Caco-2 (cell line): ENCODE measurements at regions of chr14 and their contacts with region 1.

Region 1: DNA sequence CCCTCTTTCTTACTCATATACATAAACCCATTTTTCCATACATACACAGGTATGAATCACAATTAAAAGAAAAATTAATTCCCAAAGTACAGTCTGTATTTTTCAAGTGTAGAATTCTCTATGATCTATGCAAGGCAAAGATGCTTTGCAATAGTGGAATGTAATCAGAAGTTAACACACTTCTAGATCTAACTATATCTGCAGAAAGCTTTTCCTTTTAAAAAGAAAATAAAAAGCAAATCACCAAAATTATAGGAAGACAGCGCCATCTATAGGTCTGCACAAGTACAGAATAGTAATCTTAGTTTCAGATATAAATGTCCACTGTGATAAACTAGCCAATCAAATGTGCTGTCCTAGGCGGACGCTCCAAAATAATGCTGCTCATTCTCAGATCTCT is 22.0 kb downstream of the SLC25A21 start:
- DNase-seq: peak in 1 of 2 experiments; percentile 48
- H3K4me3 ChIP-seq: no peak overlapping the region
- H3K4me3 Mint-ChIP-seq: no peak overlapping the region
- H3K27ac Mint-ChIP-seq: no peak overlapping the region
- H3K4me1 ChIP-seq: no peaks in the 10 kb centered on the region
- H3K4me1 Mint-ChIP-seq: peaks cover 6% of the 10 kb centered on the region
- H3K27me3 ChIP-seq: no peaks in the 10 kb centered on the region
- H3K27me3 Mint-ChIP-seq: no peaks in the 10 kb centered on the region
- CTCF ChIP-seq: peak; percentile 61 to 64

Region 2: GRCh38 chr14:36553656-36554260 is 596.7 kb before region 1 on chr14:
- CTCF ChIA-PET with region 1: interaction called, 14 read pairs
- POLR2A ChIA-PET with region 1: no interaction called
- intact Hi-C with region 1: loop called (anchors 2 kb)
- DNase-seq: peak in 1 of 2 experiments; percentile 48
- H3K4me3 ChIP-seq: no peak overlapping the region
- H3K4me3 Mint-ChIP-seq: no peak overlapping the region
- H3K27ac Mint-ChIP-seq: no peak overlapping the region
- H3K4me1 ChIP-seq: no peaks in the 10 kb centered on the region
- H3K4me1 Mint-ChIP-seq: no peaks in the 10 kb centered on the region
- H3K27me3 ChIP-seq: no peaks in the 10 kb centered on the region
- H3K27me3 Mint-ChIP-seq: no peaks in the 10 kb centered on the region
- CTCF ChIP-seq: peak; percentile 65 to 80

Region 3: DNA sequence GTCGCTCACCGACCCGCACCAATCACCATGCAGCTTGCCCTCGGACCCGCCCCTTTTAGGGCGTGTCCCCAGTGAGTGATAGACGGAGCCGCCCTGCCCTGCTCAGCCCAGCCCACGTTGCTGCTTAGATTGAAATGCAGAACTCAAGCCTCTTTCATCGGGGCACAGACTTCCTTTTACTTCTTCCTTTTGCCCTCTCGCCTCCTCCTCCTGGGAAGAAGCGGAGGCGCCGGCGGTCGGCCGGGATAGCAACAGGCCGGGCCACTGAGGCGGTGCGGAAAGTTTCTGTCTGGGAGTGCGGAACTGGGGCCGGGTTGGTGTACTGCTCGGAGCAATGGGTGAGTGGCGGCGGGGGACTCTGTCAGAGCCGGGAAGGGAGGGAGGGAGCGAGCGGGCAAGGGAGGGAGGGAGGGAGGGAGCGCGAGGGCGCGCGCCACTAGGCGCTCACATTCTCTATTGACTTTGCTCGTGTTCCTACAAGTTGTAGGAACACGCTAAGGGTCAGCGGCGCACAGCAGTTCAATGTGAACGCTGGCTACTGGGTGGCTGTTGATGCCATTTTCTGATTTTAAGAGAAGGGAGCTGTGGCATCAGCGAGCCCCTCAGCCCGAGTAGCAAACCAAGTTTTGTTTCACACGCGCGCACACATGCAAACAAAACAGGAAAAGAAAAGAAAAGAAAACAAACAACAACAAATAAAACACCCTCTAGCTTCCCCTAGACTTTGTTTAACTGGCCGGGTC is 488.5 kb before region 1 on chr14 and contains the start of gene PAX9:
- CTCF ChIA-PET with region 1: interaction called, 5 read pairs
- POLR2A ChIA-PET with region 1: no interaction called
- intact Hi-C with region 1: loop called (anchors 5 kb)
- DNase-seq: peak; percentile 93 to 95
- H3K4me3 ChIP-seq: peak within 1 kb of the TSS; percentile 64
- H3K4me3 Mint-ChIP-seq: peak within 1 kb of the TSS; percentile 82
- H3K27ac Mint-ChIP-seq: peak within 1 kb of the TSS; percentile 83
- H3K4me1 ChIP-seq: peaks cover 5% of the 10 kb centered on the region; the same call in 1 of the 2 replicates
- H3K4me1 Mint-ChIP-seq: no peaks in the 10 kb centered on the region
- H3K27me3 ChIP-seq: no peaks in the 10 kb centered on the region
- H3K27me3 Mint-ChIP-seq: no peaks in the 10 kb centered on the region
- CTCF ChIP-seq: no peak
- total RNA-seq, gene PAX9: 6.9 and 7.2 TPM in 2 replicates

Region 4: DNA sequence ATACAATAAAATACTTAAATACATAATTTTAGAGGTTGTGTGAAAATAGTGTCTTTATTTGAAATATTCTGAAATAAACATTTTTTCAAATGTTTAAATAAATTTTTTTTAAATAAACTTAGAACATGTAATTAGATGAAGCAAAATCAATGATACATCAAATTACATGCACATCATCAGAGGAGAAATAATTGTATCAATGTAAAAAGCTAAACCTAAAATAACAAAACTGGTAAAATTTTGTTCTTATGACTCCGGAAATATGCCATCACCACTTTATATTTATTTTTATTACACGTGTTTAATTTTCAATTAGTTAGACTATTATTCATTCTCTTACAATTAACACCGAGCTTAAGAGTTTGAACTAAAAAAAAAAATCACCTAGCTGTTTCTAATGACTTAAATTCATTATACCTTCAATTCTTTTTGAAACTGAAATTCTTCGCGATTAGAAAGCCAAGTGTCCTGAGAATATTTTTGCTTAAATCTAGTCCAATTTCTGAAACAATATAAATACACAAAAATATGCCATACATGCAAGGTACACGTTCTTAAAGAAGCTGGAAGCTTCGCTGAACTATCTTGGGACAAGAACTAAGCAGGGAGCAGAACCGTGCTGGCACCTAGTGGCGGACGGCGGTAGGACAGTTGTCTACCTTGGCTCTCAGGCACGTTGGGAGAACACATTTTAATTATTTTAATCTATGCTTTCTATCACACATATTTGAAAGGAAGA is 208.5 kb before region 1 on chr14:
- CTCF ChIA-PET with region 1: interaction called, 5 read pairs
- POLR2A ChIA-PET with region 1: no interaction called
- intact Hi-C with region 1: loop called (anchors 2 kb)
- DNase-seq: peak; percentile 67 to 82
- H3K4me3 ChIP-seq: no peak overlapping the region
- H3K4me3 Mint-ChIP-seq: no peak overlapping the region
- H3K27ac Mint-ChIP-seq: peak overlapping the region; percentile 58
- H3K4me1 ChIP-seq: peaks cover 12% of the 10 kb centered on the region
- H3K4me1 Mint-ChIP-seq: peaks cover 12% of the 10 kb centered on the region
- H3K27me3 ChIP-seq: no peaks in the 10 kb centered on the region
- H3K27me3 Mint-ChIP-seq: no peaks in the 10 kb centered on the region
- CTCF ChIP-seq: peak; percentile 94 to 95

Region 5: GRCh38 chr14:37197421-37198272 is 47.2 kb after region 1 on chr14 and contains the start of gene MIPOL1:
- CTCF ChIA-PET with region 1: no interaction called
- POLR2A ChIA-PET with region 1: no interaction called
- intact Hi-C with region 1: loop called (anchors 1 kb)
- DNase-seq: peak; percentile 83 to 86
- H3K4me3 ChIP-seq: peak within 1 kb of the TSS; percentile 73
- H3K4me3 Mint-ChIP-seq: peak within 1 kb of the TSS; percentile 98
- H3K27ac Mint-ChIP-seq: peak within 1 kb of the TSS; percentile 98
- H3K4me1 ChIP-seq: peaks cover 13% of the 10 kb centered on the region; the same call in 1 of the 2 replicates
- H3K4me1 Mint-ChIP-seq: peaks cover 18% of the 10 kb centered on the region
- H3K27me3 ChIP-seq: no peaks in the 10 kb centered on the region
- H3K27me3 Mint-ChIP-seq: no peaks in the 10 kb centered on the region
- CTCF ChIP-seq: peak in 1 of 2 experiments; percentile 52
- total RNA-seq, gene MIPOL1: 18.7 and 20.9 TPM in 2 replicates